ENCODE measurements at regions of chr1 and their contacts with region 1.

Region 1: DNA sequence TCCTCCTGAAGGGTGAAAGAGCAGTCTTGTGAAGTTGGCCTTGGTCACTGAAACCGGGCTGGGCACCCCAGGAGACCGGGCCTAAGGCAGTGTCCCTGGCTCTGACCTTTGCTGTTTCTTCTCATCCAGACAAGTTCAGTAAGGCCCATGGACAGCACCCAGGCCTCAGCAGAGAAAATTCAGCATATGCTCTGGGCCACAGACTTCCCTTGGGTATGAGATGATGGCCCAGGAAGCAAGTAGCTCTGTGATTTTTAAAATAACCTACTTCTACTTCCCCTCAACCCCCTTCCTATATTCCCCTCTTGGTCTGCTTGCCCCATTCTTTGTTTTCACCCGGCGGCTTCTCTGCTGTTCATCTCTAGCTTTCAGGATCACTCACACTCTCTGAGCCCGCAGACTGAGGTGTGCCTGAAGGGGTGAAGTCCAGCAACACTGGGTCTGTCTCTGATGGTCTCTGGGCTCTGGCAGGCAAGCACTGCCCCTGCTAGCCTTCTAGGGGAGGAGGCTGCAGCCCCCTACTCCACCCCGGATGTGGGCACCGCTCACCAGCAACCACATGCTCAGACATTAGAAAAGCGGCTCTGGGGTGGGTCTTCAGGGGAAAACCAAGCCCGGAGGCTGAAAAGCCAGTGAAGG is 2.9 kb upstream of the GPR25 start:
- DNase-seq: peak; percentile 50
- ATAC-seq: peak; percentile 53
- H3K4me3 ChIP-seq: peak overlapping the region in 4 of 5 experiments; percentile 4 to 42 (median 22)
- H3K4me3 Mint-ChIP-seq: peak overlapping the region; percentile 82
- H3K27ac ChIP-seq: peak overlapping the region; percentile 66 to 71
- H3K27ac Mint-ChIP-seq: peak overlapping the region; percentile 93
- H3K4me1 ChIP-seq: peaks cover 35 to 71% of the 10 kb centered on the region in 2 donors
- H3K4me1 Mint-ChIP-seq: peaks cover 66% of the 10 kb centered on the region
- H3K27me3 ChIP-seq: peaks cover 0 to 18% (median 4%) of the 10 kb centered on the region in 4 experiments
- H3K27me3 Mint-ChIP-seq: peaks cover 12% of the 10 kb centered on the region
- CTCF ChIP-seq: no peak

Region 2: DNA sequence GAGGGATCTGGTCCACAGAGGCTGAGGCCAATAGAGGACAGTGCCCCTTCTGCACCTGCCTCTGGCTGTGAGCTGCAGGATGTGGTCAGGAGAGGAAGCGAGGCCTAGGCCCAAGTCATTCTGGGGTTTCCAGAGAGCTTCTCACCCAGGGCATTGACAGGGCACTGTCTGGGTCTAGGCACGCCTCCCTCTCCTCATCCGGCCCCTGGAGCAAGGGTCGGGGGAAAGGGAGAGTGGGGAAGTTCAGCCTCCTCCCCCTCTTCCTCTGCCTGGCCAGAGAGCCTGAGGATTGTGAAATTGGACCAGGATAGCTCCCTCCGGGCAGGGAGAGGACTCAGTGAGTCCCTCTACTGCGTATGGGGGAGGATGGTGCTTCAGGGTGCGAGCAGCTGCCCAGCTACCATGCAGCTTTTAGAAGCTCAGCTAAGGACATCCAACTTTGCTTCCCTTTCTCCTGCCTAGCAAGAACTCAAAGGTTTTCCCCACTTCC is 18.5 kb after region 1 on chr1:
- CTCF ChIA-PET with region 1: interaction called, 9 read pairs
- POLR2A ChIA-PET with region 1: interaction called, 4 read pairs
- intact Hi-C with region 1: loop called (anchors 1 kb)
- DNase-seq: peak; percentile 69
- ATAC-seq: peak; percentile 94
- H3K4me3 ChIP-seq: peak overlapping the region in 2 of 5 experiments; percentile 6 to 23
- H3K4me3 Mint-ChIP-seq: peak overlapping the region; percentile 59
- H3K27ac ChIP-seq: peak overlapping the region in 1 of 2 donors; percentile 4
- H3K27ac Mint-ChIP-seq: peak overlapping the region; percentile 63
- H3K4me1 ChIP-seq: peaks cover 42 to 51% of the 10 kb centered on the region in 2 donors
- H3K4me1 Mint-ChIP-seq: peaks cover 52% of the 10 kb centered on the region
- H3K27me3 ChIP-seq: peaks cover 0 to 30% (median 12%) of the 10 kb centered on the region in 4 experiments
- H3K27me3 Mint-ChIP-seq: peaks cover 19% of the 10 kb centered on the region
- CTCF ChIP-seq: no peak